ENCODE measurements at regions of chr11 and their contacts with region 1.

Region 1: GRCh38 chr11:8566613-8567210 is 27.3 kb downstream of the STK33 start:
- DNase-seq: no peak
- H3K4me3 ChIP-seq: no peak overlapping the region
- H3K27me3 ChIP-seq: peaks cover 4% of the 10 kb centered on the region; the same call in 1 of the 2 replicates
- CTCF ChIP-seq: peak; percentile 53

Region 2: GRCh38 chr11:8192016-8192895 is 374.5 kb before region 1 on chr11:
- CTCF ChIA-PET with region 1: interaction called, 18 read pairs
- POLR2A ChIA-PET with region 1: no interaction called
- DNase-seq: peak; percentile 3
- H3K4me3 ChIP-seq: no peak overlapping the region
- H3K27me3 ChIP-seq: peaks cover 3% of the 10 kb centered on the region; the same call in 1 of the 2 replicates
- CTCF ChIP-seq: peak; percentile 93

Region 3: GRCh38 chr11:8225589-8226036 is 341.1 kb before region 1 on chr11:
- CTCF ChIA-PET with region 1: interaction called, 55 read pairs
- POLR2A ChIA-PET with region 1: no interaction called
- DNase-seq: no peak
- H3K4me3 ChIP-seq: no peak overlapping the region
- H3K27me3 ChIP-seq: peaks cover 2% of the 10 kb centered on the region; the same call in 1 of the 2 replicates
- CTCF ChIP-seq: peak; percentile 89

Region 4: DNA sequence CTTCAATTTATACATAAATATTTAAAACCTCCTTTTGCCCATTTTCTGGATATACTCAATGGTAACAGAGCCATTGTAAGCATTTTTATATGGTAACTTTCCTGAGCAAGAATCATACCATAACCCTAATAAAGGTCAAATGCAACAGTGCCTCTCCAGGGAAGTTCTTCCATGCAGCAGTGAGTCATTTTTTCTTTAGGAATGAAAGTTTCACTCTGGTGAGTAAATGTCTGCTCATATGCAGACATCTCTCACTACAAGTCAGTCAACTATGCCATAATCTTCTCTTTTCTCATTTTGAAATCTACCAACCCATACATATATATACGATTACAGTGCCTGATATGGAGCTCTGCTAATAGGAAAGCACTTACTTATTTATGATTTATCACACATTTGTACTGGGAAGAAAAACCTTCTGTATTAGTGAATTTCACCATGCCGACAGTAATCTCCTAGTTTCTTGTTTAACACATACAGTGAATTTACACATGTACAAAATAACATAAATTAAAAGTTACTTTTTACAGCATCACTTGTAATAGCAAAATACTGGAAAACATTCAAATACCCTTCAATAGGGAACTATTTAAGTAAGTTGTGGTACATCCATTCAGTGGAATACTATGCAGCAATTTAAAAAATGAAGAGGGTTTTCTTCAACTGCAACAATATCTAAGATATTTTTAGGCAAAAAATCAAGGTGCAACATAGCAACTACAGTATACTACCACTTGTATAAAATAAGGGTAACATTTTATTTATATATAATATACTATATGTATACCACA is 11.3 kb after region 1 on chr11:
- CTCF ChIA-PET with region 1: interaction called, 12 read pairs
- POLR2A ChIA-PET with region 1: no interaction called
- DNase-seq: no peak
- H3K4me3 ChIP-seq: no peak overlapping the region
- H3K27me3 ChIP-seq: no peaks in the 10 kb centered on the region
- CTCF ChIP-seq: no peak